A549 (cell line): ENCODE measurements at regions of chr9 and their contacts with region 1.

Region 1: DNA sequence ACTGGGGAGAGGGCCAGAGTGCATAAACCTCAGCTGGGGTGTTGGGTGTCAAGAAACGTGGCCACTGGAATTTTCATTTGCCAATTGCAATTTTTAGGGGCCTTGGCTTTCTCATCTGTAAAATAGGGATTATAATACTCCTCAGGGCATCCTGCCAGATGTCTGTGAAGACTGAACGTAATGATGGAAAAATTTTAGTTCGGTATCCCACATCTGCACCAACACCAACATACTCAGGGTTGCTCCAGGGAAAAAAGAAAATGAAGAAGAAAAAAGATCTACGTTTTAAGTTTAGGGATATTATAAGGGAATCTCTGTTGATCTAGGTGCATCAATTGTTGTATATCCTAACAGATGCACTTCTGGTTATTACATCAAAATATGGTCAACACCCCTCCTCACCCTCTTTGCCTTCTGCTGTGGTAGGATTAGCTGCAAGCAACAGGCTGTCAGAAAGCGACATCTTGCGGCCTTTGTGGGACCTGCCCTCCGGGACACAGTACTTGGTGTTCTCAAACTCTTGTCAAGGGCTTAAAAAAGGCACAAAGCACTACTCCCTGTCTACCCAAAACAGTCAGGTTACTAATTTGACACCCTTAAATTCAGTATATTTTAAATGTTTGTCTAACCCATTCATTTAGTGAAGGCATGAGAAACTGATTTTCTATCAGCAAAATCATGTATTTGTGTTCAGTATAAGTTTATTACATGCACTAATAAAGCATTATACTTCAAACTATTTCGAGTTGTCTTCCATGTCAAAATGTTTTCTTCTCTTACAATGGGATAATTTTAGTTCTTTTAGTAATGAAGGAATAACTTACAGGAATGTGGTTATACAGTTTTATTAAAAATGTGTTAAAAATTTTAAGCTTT is 8.3 kb upstream of the TBC1D2 start:
- DNase-seq: peak; percentile 74 to 81
- ATAC-seq: peak; percentile 100
- H3K4me3 ChIP-seq: no peak overlapping the region
- H3K27ac ChIP-seq: no peak overlapping the region
- H3K4me1 ChIP-seq: no peaks in the 10 kb centered on the region
- CTCF ChIP-seq: peak; percentile 96
- EP300 ChIP-seq: no peak
- POLR2A ChIP-seq: no peak
- RAD21 ChIP-seq: peak; percentile 96 to 99

Region 2: GRCh38 chr9:98056269-98057137 is 207.2 kb before region 1 on chr9 and contains the start of gene NANS:
- CTCF ChIA-PET with region 1: interaction called, 16 read pairs
- POLR2A ChIA-PET with region 1: no interaction called
- DNase-seq: peak; percentile 91 to 96
- ATAC-seq: peak; percentile 96 to 98
- H3K4me3 ChIP-seq: peak within 1 kb of the TSS; percentile 70
- H3K27ac ChIP-seq: peak within 1 kb of the TSS; percentile 86 to 93
- H3K4me1 ChIP-seq: peaks cover 16% of the 10 kb centered on the region; the same call in 2 of the 3 replicates
- CTCF ChIP-seq: no peak
- EP300 ChIP-seq: no peak
- POLR2A ChIP-seq: peak; percentile 92
- RAD21 ChIP-seq: no peak
- polyA plus RNA-seq, gene NANS: 66.6 and 70.2 TPM in 2 replicates

Region 3: DNA sequence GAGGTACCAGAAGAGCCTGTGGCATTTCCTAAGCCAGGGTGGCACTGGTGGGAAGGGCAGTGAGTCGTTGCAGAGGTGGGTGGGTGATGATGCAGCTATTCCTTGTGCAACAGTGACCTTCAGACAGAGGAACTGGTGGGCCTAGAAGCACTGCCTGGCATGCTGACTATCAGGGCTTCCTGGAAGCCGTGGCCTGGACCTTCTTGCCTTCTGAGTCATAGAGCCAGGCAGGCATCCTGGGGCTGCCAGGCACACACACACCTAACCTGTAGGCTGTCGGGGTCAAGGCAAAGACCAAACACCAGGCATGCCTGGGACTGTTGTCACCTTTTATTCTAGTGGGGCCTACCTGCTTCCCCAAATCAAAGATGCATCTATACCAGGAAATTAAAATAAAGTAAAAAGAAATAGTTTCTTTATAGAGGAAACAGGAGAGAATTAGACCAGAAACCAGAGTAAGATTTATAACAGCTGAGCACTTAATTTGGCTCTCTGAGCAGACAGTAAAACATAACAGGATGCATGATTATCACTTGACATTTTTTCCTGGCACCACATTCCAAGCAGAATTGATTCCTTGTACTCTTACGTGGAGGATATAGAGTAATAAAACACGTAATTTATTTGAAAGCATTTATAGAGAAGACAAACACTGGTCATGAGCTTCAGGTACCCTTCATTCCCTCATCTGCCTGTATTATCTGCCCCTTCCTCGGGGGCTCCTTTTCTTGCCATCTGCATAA is 182.1 kb before region 1 on chr9:
- CTCF ChIA-PET with region 1: interaction called, 13 read pairs
- POLR2A ChIA-PET with region 1: no interaction called
- DNase-seq: peak; percentile 40 to 57
- ATAC-seq: peak; percentile 77 to 87
- H3K4me3 ChIP-seq: no peak overlapping the region
- H3K27ac ChIP-seq: peak overlapping the region; percentile 67 to 83
- H3K4me1 ChIP-seq: peaks cover 18% of the 10 kb centered on the region
- CTCF ChIP-seq: no peak
- EP300 ChIP-seq: no peak
- POLR2A ChIP-seq: no peak
- RAD21 ChIP-seq: no peak

Region 4: DNA sequence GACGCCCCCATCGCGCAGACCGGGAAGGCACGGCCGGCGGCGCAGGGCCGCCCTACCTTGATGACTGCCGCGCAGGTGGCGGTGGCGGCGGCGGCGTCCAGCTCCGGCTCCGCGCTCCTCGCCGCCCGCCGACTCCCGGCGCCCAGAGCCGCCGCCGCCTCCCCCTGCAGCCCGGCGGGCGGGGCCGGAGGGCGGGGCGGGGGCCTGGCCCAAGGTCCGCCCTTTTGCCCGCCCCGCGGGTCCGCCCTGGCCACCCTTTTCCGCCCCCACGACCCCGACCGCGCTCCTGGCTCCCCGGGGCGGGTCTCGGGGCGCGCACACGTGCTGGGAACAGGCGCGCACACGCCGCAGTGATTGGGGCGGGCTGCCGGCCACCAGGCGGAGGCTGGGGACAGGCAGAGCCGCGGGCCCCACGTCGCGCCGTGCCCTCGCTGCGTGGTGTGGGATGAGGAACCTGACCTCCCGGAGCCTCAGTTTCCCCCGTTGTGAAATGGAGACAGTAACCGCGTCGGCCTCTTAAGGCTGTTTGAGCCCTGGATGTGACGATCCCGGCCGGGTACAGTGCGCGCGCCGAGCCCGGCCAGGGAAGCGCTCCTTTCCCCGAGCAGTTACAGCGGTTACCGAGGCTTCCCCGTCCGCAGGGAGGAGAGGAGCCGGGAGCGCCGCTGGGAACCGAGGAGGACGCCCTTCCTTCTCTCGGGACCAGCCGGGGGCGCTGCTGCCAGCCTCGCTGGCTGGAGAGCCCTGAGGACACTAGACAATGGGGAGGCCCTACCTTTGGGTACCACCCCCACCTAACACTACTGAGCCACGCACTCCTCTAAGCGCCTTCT is 71.0 kb before region 1 on chr9 and contains the start of gene CORO2A:
- CTCF ChIA-PET with region 1: interaction called, 24 read pairs
- POLR2A ChIA-PET with region 1: interaction called, 5 read pairs
- DNase-seq: peak; percentile 71 to 80
- ATAC-seq: peak; percentile 80 to 89
- H3K4me3 ChIP-seq: peak within 1 kb of the TSS; percentile 74
- H3K27ac ChIP-seq: peak within 1 kb of the TSS; percentile 73 to 87
- H3K4me1 ChIP-seq: peaks cover 11% of the 10 kb centered on the region; the same call in 2 of the 3 replicates
- CTCF ChIP-seq: peak; percentile 54
- EP300 ChIP-seq: no peak
- POLR2A ChIP-seq: peak; percentile 51; the same call in 1 of the 2 replicates
- RAD21 ChIP-seq: peak; percentile 29 to 33; a peak in 1 of 5 replicates
- polyA plus RNA-seq, gene CORO2A: 2.0 and 3.1 TPM in 2 replicates

Region 5: DNA sequence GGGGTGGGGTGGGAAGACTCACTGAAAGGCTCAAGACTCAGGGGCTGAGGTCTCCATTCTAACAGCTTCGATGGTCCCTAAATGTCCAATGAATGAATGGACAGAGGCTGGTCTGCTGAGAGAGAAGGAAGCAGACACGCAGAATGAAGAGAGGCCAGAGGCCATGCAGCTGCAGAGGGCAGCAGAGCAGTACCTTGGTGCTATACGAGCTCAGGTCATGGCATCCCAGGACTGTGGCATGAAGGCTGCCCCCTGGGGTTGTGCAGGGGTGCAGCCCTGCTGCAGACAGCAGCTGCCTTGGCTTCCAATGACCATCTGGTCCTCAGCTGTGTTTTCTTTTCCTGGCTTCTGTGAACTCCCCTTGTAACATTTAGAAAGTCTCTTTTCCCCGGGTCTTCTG is 56.1 kb before region 1 on chr9:
- CTCF ChIA-PET with region 1: interaction called, 127 read pairs
- POLR2A ChIA-PET with region 1: no interaction called
- DNase-seq: no peak
- ATAC-seq: peak; percentile 31 to 40; a peak in 2 of 6 replicates
- H3K4me3 ChIP-seq: no peak overlapping the region
- H3K27ac ChIP-seq: no peak overlapping the region
- H3K4me1 ChIP-seq: peaks cover 3% of the 10 kb centered on the region; the same call in 1 of the 3 replicates
- CTCF ChIP-seq: no peak
- EP300 ChIP-seq: no peak
- POLR2A ChIP-seq: no peak
- RAD21 ChIP-seq: 0 out of 5 replicates have a peak, but pooled peaks of 1 of the 2 experiments have one; percentile 7

Region 6: GRCh38 chr9:98241357-98242300 is 22.1 kb before region 1 on chr9:
- CTCF ChIA-PET with region 1: interaction called, 13 read pairs
- POLR2A ChIA-PET with region 1: no interaction called
- DNase-seq: no peak
- ATAC-seq: peak; percentile 56 to 86; a peak in 3 of 6 replicates
- H3K4me3 ChIP-seq: no peak overlapping the region
- H3K27ac ChIP-seq: no peak overlapping the region
- H3K4me1 ChIP-seq: peaks cover 21% of the 10 kb centered on the region
- CTCF ChIP-seq: no peak
- EP300 ChIP-seq: no peak
- POLR2A ChIP-seq: no peak
- RAD21 ChIP-seq: 0 out of 5 replicates have a peak, but pooled peaks of 1 of the 2 experiments have one; percentile 6

Region 7: DNA sequence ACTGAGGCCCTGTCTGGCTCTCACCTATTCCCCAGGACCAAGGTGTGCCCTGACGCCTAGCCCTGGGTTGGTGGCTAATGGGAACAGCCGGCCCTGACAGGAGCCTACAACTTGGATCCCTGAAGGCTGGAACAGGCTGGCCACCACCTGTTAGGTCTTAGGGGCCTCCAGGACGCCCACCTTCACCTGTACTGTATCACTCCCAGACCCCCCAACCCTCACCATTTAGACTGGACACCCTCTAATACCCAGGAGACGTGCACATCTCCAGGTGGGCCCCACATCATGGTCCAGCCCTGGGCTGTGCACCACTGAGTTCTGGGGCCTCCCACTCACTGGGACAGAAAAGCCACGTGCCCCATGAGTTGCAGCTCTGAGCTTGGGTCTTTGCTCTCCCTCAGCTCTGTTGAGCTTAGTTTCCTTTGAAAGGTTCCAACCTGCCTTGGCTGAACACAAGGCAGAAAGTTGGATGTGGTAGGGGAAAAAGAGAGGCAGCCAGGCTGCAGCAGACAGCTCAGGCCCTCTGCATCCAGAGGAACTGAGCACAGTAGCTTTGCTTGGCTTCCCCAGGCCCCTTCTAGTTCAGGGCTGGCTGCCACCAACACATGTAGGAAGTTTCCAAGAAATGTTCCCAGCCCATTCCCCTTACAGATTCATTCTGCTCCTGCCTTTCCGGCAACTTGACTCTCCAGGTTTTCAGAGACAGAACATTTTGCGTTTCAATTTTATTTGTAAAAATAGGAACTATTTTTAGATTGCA is 108.5 kb after region 1 on chr9:
- CTCF ChIA-PET with region 1: no interaction called
- POLR2A ChIA-PET with region 1: no interaction called
- DNase-seq: no peak
- ATAC-seq: no peak
- H3K4me3 ChIP-seq: no peak overlapping the region
- H3K27ac ChIP-seq: no peak overlapping the region
- H3K4me1 ChIP-seq: peaks cover 26% of the 10 kb centered on the region
- CTCF ChIP-seq: no peak
- EP300 ChIP-seq: no peak
- POLR2A ChIP-seq: no peak
- RAD21 ChIP-seq: no peak